ENCODE measurements at regions of chr9 and their contacts with region 1.

Region 1: GRCh38 chr9:90914868-90915483 is 113.4 kb downstream of the SYK start:
- DNase-seq: peak; percentile 59
- H3K4me3 Mint-ChIP-seq: no peak overlapping the region
- H3K27ac Mint-ChIP-seq: no peak overlapping the region
- H3K4me1 Mint-ChIP-seq: peaks cover 10% of the 10 kb centered on the region
- H3K27me3 Mint-ChIP-seq: no peaks in the 10 kb centered on the region

Region 2: GRCh38 chr9:90795871-90796317 is 119.1 kb before region 1 on chr9:
- intact Hi-C with region 1: no loop called
- DNase-seq: no peak
- H3K4me3 Mint-ChIP-seq: no peak overlapping the region
- H3K27ac Mint-ChIP-seq: no peak overlapping the region
- H3K4me1 Mint-ChIP-seq: no peaks in the 10 kb centered on the region
- H3K27me3 Mint-ChIP-seq: peaks cover 44% of the 10 kb centered on the region

Region 3: DNA sequence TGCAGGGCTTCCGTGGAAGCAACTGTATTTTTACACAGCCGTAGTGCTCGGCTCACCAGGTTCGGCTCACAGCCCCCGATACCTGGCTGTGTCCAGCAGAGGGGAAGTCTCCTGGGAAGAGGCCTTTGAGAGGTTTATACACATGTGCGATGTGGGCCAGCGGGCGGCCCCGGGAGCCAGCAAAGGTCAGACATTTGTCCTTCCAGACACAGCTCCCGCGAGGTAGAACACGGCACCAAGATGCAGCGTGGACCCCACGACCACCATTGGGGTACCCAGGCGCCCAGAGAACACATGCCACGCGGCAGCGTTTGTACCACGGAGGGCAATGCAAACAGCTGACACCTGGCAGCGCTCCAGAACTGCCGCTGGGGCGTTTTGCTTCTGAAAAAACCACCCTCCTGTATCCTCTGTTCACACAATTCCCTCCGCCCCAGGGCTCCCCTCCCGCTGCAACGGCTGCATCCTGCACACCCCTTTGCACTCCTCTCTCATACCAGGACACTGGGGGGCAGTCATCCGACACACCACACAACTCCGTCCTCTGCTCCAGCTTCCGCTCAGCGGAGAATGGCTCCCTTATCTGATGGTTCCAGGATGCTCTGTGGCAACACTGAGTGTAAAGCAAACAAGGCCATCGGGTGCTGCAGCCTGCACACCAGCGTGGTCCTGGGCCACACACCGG is 122.0 kb after region 1 on chr9:
- intact Hi-C with region 1: loop called (anchors 1 kb)
- DNase-seq: peak; percentile 69
- H3K4me3 Mint-ChIP-seq: peak overlapping the region; percentile 35
- H3K27ac Mint-ChIP-seq: peak overlapping the region; percentile 70
- H3K4me1 Mint-ChIP-seq: peaks cover 61% of the 10 kb centered on the region
- H3K27me3 Mint-ChIP-seq: peaks cover 3% of the 10 kb centered on the region

Region 4: GRCh38 chr9:91177661-91178280 is 262.8 kb after region 1 on chr9:
- intact Hi-C with region 1: loop called (anchors 5 kb)
- DNase-seq: no peak
- H3K4me3 Mint-ChIP-seq: peak overlapping the region; percentile 35
- H3K27ac Mint-ChIP-seq: peak overlapping the region; percentile 96
- H3K4me1 Mint-ChIP-seq: peaks cover 71% of the 10 kb centered on the region
- H3K27me3 Mint-ChIP-seq: no peaks in the 10 kb centered on the region

Region 5: GRCh38 chr9:91433180-91433579 is 518.2 kb after region 1 on chr9:
- intact Hi-C with region 1: loop called (anchors 1 kb)
- DNase-seq: no peak
- H3K4me3 Mint-ChIP-seq: no peak overlapping the region
- H3K27ac Mint-ChIP-seq: no peak overlapping the region
- H3K4me1 Mint-ChIP-seq: peaks cover 28% of the 10 kb centered on the region
- H3K27me3 Mint-ChIP-seq: peaks cover 20% of the 10 kb centered on the region

Region 6: DNA sequence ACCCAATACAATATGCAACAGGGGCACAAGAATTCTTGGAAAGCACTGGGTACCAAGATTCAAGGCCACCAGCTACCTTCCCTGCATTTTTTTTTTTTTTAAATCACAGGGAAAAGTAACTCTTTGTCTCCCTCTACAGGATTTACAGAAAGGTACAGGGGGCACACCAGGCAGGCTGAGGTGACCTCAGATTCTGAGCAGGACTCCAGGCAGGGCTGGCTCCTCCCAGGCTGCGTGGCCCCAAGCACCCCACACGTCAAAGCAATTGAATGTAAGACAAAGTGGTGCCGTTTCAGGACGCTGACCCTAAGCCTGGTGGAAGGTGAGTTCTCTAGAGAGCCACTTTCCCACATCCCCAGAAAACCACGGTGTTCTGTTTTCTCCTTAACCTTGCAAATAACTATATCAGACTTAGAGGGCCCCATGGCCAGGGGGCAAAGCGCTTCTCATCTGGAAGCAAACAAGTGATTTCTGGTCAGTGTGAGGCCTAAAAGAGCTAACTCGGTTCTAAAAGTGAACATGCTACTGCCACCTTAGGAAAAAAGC is 812.4 kb after region 1 on chr9:
- intact Hi-C with region 1: loop called (anchors 1 kb)
- DNase-seq: peak; percentile 12
- H3K4me3 Mint-ChIP-seq: no peak overlapping the region
- H3K27ac Mint-ChIP-seq: no peak overlapping the region
- H3K4me1 Mint-ChIP-seq: peaks cover 8% of the 10 kb centered on the region
- H3K27me3 Mint-ChIP-seq: no peaks in the 10 kb centered on the region

Region 7: DNA sequence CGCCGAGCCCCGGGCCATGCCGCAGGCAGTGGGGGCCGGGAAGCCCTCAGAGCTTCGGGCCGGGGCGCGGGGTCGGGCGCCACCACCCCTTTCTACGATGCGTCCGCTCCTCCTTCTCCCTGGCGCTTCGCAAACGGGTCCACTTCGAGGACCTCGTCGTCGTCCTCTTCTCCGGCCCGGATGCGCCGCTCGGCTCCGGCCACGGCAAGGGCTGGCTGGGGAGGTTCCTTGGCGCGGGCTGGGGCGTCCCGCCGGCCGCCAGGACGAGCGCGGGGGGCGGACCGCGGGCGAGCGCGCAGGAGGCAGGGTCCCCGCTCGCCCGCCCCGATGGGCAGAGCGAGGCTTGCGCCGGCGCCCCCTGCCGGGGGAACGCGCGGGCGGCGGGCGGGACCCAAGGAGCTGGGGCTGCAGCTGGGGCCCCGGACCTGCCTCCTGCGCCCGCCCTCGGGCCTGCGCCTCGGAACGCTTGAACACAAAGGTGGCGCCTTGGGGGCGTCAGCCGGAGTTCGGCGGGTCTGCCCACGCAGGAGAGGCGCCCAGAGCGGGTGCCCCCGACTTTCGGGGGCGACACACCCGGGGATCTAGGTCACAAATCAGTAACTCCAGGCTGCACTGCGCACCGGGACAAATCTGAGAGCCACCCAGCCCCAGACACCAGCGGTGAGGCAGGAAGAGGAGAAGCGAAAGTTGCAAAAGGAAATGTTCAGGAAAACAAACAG is 1035.1 kb after region 1 on chr9 and contains the start of gene ROR2:
- intact Hi-C with region 1: loop called (anchors 10 kb)
- DNase-seq: peak; percentile 73
- H3K4me3 Mint-ChIP-seq: peak within 1 kb of the TSS; percentile 84
- H3K27ac Mint-ChIP-seq: peak within 1 kb of the TSS; percentile 15
- H3K4me1 Mint-ChIP-seq: peaks cover 14% of the 10 kb centered on the region
- H3K27me3 Mint-ChIP-seq: peaks cover 50% of the 10 kb centered on the region
- total RNA-seq, gene ROR2: 1.1 and 1.6 TPM in 2 replicates

Measured in activated T-helper 1 cell treated with anti-CD3 and anti-CD28 coated beads, Interleukin-12 subunit alpha, Interleukin-12 subunit beta, Interleukin-2, Interleukin-4 antibody, amounts not matched to agents 30 ng/mL and 10 ng/mL and 1 ng/mL, durations not matched to agents 14 hours and 24 hours and 36 hours (primary cell).